Heart right ventricle (tissue), 16 donors: ENCODE measurements at regions of chr9 and their contacts with region 1.

Region 1: GRCh38 chr9:127980706-127981558 is at the start of gene EEIG1:
- DNase-seq: peak; percentile 96 to 98
- ATAC-seq: peak; percentile 94 to 97 (median 96)
- H3K4me3 ChIP-seq: peak within 1 kb of the TSS; percentile 60 to 97 (median 81)
- H3K27ac ChIP-seq: peak within 1 kb of the TSS; percentile 52 to 94 (median 92)
- H3K4me1 ChIP-seq: peaks cover 19 to 64% (median 50%) of the 10 kb centered on the region in 9 donors
- H3K27me3 ChIP-seq: peaks cover 0 to 7% (median 0%) of the 10 kb centered on the region in 7 donors
- CTCF ChIP-seq: no peak
- total RNA-seq, gene EEIG1: 11.1 to 33.5 (median 25.1) TPM

Region 2: GRCh38 chr9:127949827-127950512 is 31.0 kb before region 1 on chr9:
- intact Hi-C with region 1: loop called in 2 of 10 experiments (anchors 5 kb)
- DNase-seq: peak; percentile 47 to 65
- ATAC-seq: peak in 7 of 8 donors; percentile 17 to 70 (median 57)
- H3K4me3 ChIP-seq: peak overlapping the region in 4 of 10 donors; percentile 2 to 17 (median 9)
- H3K27ac ChIP-seq: peak overlapping the region in 9 of 10 donors; percentile 39 to 85 (median 76)
- H3K4me1 ChIP-seq: peaks cover 4 to 92% (median 51%) of the 10 kb centered on the region in 9 donors
- H3K27me3 ChIP-seq: no peaks in the 10 kb centered on the region
- CTCF ChIP-seq: no peak